ENCODE measurements at regions of chr18 and their contacts with region 1.

Region 1: DNA sequence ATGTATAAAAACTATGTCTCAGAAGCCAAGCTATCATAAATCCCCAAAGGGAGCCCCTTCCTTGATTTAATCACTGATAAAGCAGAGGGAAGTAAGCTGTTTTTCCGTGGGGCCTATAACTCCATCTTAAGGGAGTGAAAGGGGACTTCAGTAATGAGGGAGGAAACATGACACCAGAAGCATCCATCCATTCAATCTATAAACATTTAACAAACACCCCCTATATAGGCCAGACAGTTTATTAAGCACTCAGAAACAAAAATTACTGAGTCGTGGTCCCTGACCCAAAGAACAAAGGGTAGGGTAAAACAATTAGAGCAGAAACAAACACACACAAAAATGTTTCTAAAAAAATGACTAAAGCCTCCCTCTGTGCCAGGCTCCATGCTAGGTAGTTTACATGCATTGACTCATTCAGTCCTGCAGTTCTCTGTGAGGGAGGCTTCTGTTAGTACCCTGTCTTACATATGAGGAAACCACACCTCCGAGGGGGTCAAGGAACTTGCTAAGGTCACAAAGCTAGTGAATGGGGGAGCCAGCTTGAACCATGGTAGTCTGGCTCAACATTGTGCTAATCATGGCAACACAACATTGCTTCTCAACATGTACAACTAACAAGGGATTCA is 472.1 kb downstream of the CDH2 start:
- DNase-seq: no peak
- H3K4me3 ChIP-seq: no peak overlapping the region
- H3K27ac ChIP-seq: no peak overlapping the region
- H3K4me1 ChIP-seq: no peaks in the 10 kb centered on the region
- H3K27me3 ChIP-seq: no peaks in the 10 kb centered on the region
- CTCF ChIP-seq: no peak
- POLR2A ChIP-seq: no peak

Region 2: DNA sequence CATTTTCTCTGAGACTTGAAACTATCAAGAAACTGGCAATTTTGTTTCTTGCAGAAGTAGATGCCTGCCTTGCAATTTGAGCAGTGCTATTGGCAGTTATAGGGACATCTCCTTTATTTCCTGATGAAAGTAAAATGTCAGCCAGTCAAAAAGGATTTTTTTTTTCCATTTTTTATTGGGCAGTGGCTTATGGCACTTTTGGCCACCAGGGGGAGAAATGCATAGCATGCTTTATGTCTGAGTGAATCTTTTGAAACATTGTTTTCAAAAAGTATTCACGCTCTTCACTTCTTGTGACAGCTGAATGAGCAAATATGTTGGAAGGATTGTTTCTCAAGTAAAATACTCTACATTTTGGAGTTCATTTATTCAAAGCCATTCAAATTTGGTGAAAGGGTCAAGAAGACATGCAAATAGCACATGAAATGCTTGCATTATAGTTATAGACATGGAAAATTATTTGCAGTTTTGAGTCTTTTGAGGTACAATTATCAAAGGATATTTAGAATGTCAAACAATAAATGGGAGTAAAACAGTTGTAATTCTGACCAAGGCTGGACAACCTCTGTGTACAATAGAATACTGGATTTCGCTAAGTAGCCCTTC is 18.9 kb before region 1 on chr18:
- CTCF ChIA-PET with region 1: interaction called, 10 read pairs
- POLR2A ChIA-PET with region 1: no interaction called
- dilution Hi-C with region 1: no loop called
- intact Hi-C with region 1: no loop called
- DNase-seq: peak; percentile 40
- H3K4me3 ChIP-seq: no peak overlapping the region
- H3K27ac ChIP-seq: no peak overlapping the region
- H3K4me1 ChIP-seq: no peaks in the 10 kb centered on the region
- H3K27me3 ChIP-seq: no peaks in the 10 kb centered on the region
- CTCF ChIP-seq: peak; percentile 58
- POLR2A ChIP-seq: no peak

Region 3: DNA sequence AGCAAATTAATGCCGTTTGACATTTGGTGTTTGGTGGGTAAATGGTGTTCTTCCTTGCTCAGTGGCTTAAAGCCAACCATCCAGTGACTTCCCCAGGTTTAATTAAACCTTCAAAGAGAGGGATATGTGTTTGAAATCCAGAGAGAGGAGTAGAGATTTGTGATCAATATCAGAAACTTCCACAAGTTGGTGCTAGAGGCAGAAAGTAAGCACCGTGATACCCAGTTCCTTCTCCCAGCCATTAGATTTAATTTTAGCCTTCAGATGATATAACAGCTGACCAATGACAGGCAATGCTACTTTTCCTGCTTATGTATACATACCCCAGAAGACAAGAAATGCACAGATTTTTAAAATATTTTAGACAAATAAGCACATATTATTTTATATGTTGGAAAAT is 73.6 kb after region 1 on chr18:
- CTCF ChIA-PET with region 1: no interaction called
- POLR2A ChIA-PET with region 1: no interaction called
- dilution Hi-C with region 1: no loop called
- intact Hi-C with region 1: no loop called
- DNase-seq: peak; percentile 32
- H3K4me3 ChIP-seq: no peak overlapping the region
- H3K27ac ChIP-seq: no peak overlapping the region
- H3K4me1 ChIP-seq: no peaks in the 10 kb centered on the region
- H3K27me3 ChIP-seq: peaks cover 1 to 8% of the 10 kb centered on the region in 2 experiments
- CTCF ChIP-seq: peak; percentile 11 to 42
- POLR2A ChIP-seq: no peak